Activated T-helper 1 cell treated with anti-CD3 and anti-CD28 coated beads, Interleukin-12 subunit alpha, Interleukin-12 subunit beta, Interleukin-2, Interleukin-4 antibody, amounts not matched to agents 30 ng/mL and 10 ng/mL and 1 ng/mL, durations not matched to agents 14 hours and 24 hours and 36 hours (primary cell): ENCODE measurements at regions of chr10 and their contacts with region 1.

Region 1: DNA sequence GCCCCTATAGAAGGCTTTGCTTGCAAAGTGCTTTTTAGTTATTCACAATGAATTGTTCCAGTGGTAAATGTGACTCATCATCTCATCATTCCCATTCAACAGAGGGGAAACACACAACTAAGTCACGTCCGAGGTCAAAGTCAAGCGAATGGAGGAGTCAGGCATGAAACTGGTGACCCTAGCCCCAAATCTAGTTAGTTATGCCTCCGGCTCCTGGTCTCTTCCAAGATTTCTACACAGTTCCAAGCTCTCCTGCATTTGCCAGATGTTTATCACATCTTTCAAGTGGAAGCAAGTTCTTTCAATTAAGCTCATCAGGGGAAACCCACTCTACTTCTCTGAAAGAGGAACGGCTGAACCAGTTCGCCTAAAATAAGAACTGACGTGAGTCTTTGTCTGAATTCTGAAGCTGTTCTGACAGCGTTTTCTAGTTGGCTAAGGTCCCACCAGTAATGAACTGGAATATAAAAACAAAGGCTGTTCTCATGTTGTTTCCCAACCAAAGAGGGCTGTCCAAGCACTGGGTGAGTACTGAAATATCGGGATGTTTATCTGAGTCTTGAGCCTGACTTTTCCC is 140.9 kb upstream of the NRBF2 start:
- DNase-seq: no peak
- H3K4me3 Mint-ChIP-seq: peak overlapping the region; percentile 58
- H3K27ac Mint-ChIP-seq: peak overlapping the region; percentile 94
- H3K4me1 Mint-ChIP-seq: peaks cover 52% of the 10 kb centered on the region
- H3K27me3 Mint-ChIP-seq: peaks cover 4% of the 10 kb centered on the region

Region 2: GRCh38 chr10:62779487-62780248 is 212.6 kb before region 1 on chr10:
- intact Hi-C with region 1: loop called (anchors 1 kb)
- DNase-seq: peak; percentile 48
- H3K4me3 Mint-ChIP-seq: peak overlapping the region; percentile 27
- H3K27ac Mint-ChIP-seq: peak overlapping the region; percentile 76
- H3K4me1 Mint-ChIP-seq: peaks cover 45% of the 10 kb centered on the region
- H3K27me3 Mint-ChIP-seq: peaks cover 19% of the 10 kb centered on the region

Region 3: GRCh38 chr10:62980687-62981086 is 11.5 kb before region 1 on chr10:
- intact Hi-C with region 1: loop called (anchors 1 kb)
- DNase-seq: no peak
- H3K4me3 Mint-ChIP-seq: no peak overlapping the region
- H3K27ac Mint-ChIP-seq: peak overlapping the region; percentile 89
- H3K4me1 Mint-ChIP-seq: peaks cover 30% of the 10 kb centered on the region
- H3K27me3 Mint-ChIP-seq: no peaks in the 10 kb centered on the region

Region 4: DNA sequence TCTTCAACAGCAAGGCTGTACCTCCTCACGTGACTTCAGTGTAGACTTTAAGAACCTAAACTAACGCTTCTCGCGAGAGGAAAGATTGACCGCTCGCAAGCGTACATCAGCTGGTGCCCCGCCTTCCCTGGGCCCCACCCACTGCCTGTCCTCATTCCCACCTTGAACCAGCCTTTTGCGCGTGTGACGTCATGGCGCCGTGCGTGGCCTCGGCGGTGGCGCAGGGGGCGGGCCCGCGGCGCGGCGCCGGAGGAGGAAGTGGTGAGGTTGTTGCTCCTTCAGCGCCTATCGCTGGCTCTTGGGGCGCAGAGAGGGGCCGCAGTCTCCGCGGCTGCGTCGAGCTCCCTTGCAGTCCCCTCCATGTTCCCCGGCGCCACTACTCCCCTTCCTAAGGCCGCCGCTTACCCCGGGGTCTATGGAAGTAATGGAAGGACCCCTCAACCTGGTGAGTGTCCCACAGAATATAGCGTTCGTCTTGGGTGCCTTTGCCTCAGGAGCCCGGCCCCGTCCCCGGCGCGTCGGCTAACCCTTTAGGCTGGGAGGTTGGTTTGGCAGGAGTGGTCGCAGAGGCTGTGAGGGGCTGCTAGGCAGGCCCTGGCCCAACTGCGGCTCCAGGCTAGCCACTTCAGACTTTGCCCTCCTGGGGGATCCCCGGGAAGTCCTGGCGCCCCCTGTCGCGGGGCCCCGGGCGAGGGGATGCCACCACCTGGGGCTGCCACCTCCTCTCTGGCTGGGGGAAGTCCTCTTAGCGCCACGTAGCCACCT is 141.0 kb after region 1 on chr10 and contains the start of gene NRBF2:
- intact Hi-C with region 1: loop called (anchors 1 kb)
- DNase-seq: peak; percentile 97
- H3K4me3 Mint-ChIP-seq: peak within 1 kb of the TSS; percentile 91
- H3K27ac Mint-ChIP-seq: peak within 1 kb of the TSS; percentile 83
- H3K4me1 Mint-ChIP-seq: peaks cover 32% of the 10 kb centered on the region
- H3K27me3 Mint-ChIP-seq: peaks cover 3% of the 10 kb centered on the region
- total RNA-seq, gene NRBF2: 30.0 and 30.8 TPM in 2 replicates

Region 5: DNA sequence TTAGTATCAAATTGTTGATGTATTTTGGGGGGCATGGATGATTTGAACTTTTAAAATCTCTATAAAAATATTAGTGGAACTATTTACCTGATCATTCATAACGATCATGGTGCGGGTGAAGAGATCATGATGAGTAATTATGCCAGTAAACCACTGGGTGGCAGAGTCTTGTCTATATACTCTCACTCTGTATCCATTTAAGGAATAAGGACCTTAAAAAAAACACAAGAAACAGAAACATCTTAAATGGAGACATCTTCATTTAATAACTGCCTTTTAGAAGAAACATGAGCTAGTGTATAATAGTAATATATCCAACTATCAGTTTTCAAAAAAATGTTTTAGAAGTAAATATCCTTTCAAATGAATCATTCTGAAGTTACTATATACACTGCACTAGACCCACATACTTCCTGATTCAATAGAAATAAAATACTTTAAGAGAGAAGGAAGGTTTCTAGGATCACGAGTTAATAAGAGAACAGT is 224.9 kb after region 1 on chr10:
- intact Hi-C with region 1: no loop called
- DNase-seq: no peak
- H3K4me3 Mint-ChIP-seq: no peak overlapping the region
- H3K27ac Mint-ChIP-seq: peak overlapping the region; percentile 13
- H3K4me1 Mint-ChIP-seq: peaks cover 51% of the 10 kb centered on the region
- H3K27me3 Mint-ChIP-seq: no peaks in the 10 kb centered on the region

Region 6: GRCh38 chr10:63788152-63788821 is 796.1 kb after region 1 on chr10:
- intact Hi-C with region 1: no loop called
- DNase-seq: no peak
- H3K4me3 Mint-ChIP-seq: no peak overlapping the region
- H3K27ac Mint-ChIP-seq: no peak overlapping the region
- H3K4me1 Mint-ChIP-seq: no peaks in the 10 kb centered on the region
- H3K27me3 Mint-ChIP-seq: peaks cover 4% of the 10 kb centered on the region